ENCODE measurements at regions of chr6 and their contacts with region 1.

Region 1: DNA sequence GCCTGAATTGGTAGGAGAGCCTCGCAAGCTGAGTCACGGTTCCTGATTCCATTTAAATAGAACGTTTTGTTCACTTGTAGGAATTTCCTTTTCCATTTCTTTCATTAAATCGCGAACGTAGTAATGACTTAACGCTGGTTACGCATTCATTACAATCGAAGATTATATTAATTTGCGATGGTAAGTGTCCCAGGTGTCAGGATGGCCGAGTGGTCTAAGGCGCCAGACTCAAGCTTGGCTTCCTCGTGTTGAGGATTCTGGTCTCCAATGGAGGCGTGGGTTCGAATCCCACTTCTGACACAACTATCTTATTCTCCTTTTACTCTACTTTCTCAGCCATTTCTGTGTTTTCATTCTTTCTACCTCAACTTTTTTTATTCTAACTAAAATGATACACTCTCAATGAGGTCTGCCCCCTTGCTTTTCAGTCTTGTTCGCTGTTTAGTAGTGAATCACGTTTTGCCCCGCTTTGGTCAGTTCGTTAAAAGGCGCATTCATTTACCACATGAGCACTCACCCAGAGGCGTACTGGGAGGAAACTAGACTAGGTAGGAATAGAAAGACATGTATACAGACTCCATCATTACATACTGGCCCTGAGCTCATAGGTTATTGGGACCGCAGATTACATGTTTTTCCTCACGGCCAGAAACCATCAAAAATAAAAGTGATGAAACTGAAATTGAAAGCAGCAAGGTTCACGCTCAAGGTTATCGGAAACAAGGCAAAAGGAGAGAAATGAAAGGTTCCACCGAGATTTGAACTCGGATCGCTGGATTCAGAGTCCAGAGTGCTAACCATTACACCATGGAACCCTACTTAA is 17.3 kb upstream of the TRIM27 start:
- DNase-seq: peak; percentile 86
- H3K4me3 ChIP-seq: peak overlapping the region; percentile 67 to 84 (median 73)
- H3K27ac ChIP-seq: peak overlapping the region; percentile 62
- H3K4me1 ChIP-seq: peaks cover 7% of the 10 kb centered on the region
- H3K27me3 ChIP-seq: no peaks in the 10 kb centered on the region
- CTCF ChIP-seq: no peak

Region 2: GRCh38 chr6:28542440-28543296 is 398.4 kb before region 1 on chr6:
- CTCF ChIA-PET with region 1: no interaction called
- dilution Hi-C with region 1: no loop called
- in situ Hi-C with region 1: no loop called
- intact Hi-C with region 1: loop called (anchors 5 kb)
- DNase-seq: peak; percentile 95
- H3K4me3 ChIP-seq: peak overlapping the region; percentile 36 to 67 (median 42)
- H3K27ac ChIP-seq: no peak overlapping the region
- H3K4me1 ChIP-seq: peaks cover 12% of the 10 kb centered on the region
- H3K27me3 ChIP-seq: no peaks in the 10 kb centered on the region
- CTCF ChIP-seq: peak; percentile 59 to 63

Region 3: DNA sequence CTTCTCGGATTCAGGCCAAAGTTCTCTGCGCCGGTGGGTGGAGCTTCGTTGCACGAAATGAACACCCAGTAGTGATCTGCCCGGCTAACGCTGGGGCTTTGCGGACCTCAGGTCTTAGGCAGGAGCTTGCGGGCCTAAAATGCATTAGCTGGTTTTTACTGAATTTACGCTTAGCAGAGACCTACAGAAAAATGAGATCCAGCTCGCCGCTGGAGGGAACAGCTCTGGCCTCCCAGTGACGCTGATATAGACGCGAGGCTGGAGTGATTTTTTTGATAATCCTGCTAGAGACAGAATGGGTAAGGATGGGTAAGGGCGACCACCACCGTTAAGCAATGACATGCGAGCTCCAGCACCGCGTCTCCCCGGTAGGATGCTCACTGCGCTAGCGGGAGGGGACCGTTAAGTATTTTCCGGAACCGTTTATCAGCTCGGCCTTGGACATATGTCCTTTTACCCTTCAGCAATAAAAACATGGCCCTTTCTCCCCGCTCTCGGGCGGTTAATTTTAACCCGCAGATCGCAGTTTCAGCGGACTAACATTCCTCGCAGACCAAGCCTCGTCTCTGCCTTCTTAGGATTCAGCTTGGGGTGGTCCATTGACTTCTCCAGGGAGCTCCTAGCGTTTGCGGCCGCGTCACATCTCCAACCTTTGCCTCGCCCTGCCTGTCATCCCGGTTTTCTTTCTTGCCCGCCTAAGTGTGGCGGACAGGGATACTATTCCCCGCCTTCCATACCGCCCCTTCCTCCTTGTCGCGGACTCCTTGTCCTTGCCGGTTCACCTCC is 306.1 kb before region 1 on chr6:
- CTCF ChIA-PET with region 1: no interaction called
- dilution Hi-C with region 1: no loop called
- in situ Hi-C with region 1: no loop called
- intact Hi-C with region 1: no loop called
- DNase-seq: peak; percentile 9
- H3K4me3 ChIP-seq: peak overlapping the region; percentile 10 to 40 (median 36)
- H3K27ac ChIP-seq: no peak overlapping the region
- H3K4me1 ChIP-seq: no peaks in the 10 kb centered on the region
- H3K27me3 ChIP-seq: peaks cover 9% of the 10 kb centered on the region
- CTCF ChIP-seq: no peak

Region 4: GRCh38 chr6:28725890-28726348 is 215.2 kb before region 1 on chr6:
- CTCF ChIA-PET with region 1: no interaction called
- dilution Hi-C with region 1: no loop called
- in situ Hi-C with region 1: no loop called
- intact Hi-C with region 1: no loop called
- DNase-seq: peak; percentile 71
- H3K4me3 ChIP-seq: no peak overlapping the region
- H3K27ac ChIP-seq: no peak overlapping the region
- H3K4me1 ChIP-seq: no peaks in the 10 kb centered on the region
- H3K27me3 ChIP-seq: no peaks in the 10 kb centered on the region
- CTCF ChIP-seq: no peak

Region 5: DNA sequence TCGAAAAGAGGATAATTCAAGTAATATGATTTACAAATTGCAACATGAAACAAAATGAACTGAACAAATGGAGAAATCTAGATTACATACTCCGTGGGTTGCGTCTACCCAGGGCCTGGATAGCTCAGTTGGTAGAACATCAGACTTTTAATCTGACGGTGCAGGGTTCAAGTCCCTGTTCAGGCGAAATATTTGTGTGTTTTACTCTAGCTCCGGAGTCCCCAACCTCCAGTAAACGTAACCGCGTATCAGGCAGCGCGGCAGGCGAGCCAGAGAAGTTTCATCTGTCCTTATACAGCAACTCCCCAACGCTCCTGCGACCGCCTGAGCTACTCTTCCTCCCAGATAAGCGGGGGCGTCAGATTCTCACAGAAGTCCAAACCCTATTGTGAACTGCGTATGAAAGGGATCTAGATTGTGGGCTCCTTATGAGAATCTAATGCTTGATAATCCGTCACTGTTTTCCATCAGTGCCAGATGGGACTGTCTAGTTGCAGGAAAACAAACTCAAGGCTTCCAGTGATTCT is 193.4 kb before region 1 on chr6:
- CTCF ChIA-PET with region 1: no interaction called
- dilution Hi-C with region 1: no loop called
- in situ Hi-C with region 1: no loop called
- intact Hi-C with region 1: loop called (anchors 10 kb)
- DNase-seq: peak; percentile 92
- H3K4me3 ChIP-seq: peak overlapping the region; percentile 46 to 62 (median 56)
- H3K27ac ChIP-seq: no peak overlapping the region
- H3K4me1 ChIP-seq: peaks cover 12% of the 10 kb centered on the region
- H3K27me3 ChIP-seq: no peaks in the 10 kb centered on the region
- CTCF ChIP-seq: no peak

Region 6: GRCh38 chr6:28807682-28808280 is 133.3 kb before region 1 on chr6:
- CTCF ChIA-PET with region 1: interaction called, 5 read pairs
- dilution Hi-C with region 1: no loop called
- in situ Hi-C with region 1: no loop called
- intact Hi-C with region 1: loop called (anchors 1 kb)
- DNase-seq: peak; percentile 70
- H3K4me3 ChIP-seq: peak overlapping the region; percentile 16 to 33 (median 32)
- H3K27ac ChIP-seq: no peak overlapping the region
- H3K4me1 ChIP-seq: peaks cover 8% of the 10 kb centered on the region
- H3K27me3 ChIP-seq: no peaks in the 10 kb centered on the region
- CTCF ChIP-seq: no peak

Region 7: GRCh38 chr6:28868873-28869272 is 72.2 kb before region 1 on chr6:
- CTCF ChIA-PET with region 1: no interaction called
- dilution Hi-C with region 1: no loop called
- in situ Hi-C with region 1: no loop called
- intact Hi-C with region 1: no loop called
- DNase-seq: no peak
- H3K4me3 ChIP-seq: no peak overlapping the region
- H3K27ac ChIP-seq: no peak overlapping the region
- H3K4me1 ChIP-seq: peaks cover 9% of the 10 kb centered on the region
- H3K27me3 ChIP-seq: no peaks in the 10 kb centered on the region
- CTCF ChIP-seq: no peak

Region 8: DNA sequence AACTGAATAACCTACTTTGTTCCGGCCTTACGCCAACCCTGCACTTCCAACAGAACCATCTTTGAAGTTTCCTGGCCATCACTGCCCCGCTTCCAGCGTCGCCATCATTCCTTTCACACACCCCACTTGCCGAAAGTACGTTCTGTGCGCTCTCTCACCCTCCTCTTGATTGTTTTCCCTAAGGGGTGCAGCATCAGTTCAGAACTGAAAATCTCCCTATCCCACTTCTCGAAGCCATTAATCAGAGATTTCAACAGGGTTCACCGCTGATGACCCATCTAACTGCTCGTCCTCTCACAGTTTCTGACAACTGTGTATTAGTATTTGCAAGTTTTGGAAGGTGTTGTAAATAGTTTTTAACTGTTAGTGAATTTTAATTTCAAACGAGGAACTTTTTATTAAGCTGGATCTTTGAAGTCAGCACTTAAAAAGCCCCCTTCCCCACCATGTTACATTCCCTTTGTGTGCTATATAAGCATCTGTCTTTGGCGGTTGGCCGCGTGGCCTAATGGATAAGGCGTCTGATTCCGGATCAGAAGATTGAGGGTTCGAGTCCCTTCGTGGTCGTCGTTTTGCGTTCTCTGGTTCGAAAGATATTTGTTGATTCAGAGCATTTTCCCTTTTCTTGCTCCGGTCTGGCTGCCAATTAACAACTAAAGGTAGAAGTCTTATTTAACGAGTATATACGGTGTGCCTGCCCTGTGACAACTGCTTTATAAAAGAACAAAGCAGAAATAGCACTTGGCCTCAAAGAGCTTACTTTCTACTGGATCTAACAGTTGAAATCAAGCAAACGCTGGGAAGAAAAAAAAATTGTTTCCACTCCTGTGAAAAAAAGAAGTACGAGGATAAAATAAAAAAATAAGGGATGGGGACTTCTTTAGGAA is 59.9 kb before region 1 on chr6:
- CTCF ChIA-PET with region 1: no interaction called
- dilution Hi-C with region 1: no loop called
- in situ Hi-C with region 1: no loop called
- intact Hi-C with region 1: loop called (anchors 1 kb)
- DNase-seq: peak; percentile 58
- H3K4me3 ChIP-seq: peak overlapping the region; percentile 62 to 65 (median 65)
- H3K27ac ChIP-seq: no peak overlapping the region
- H3K4me1 ChIP-seq: no peaks in the 10 kb centered on the region
- H3K27me3 ChIP-seq: no peaks in the 10 kb centered on the region
- CTCF ChIP-seq: no peak

Region 9: DNA sequence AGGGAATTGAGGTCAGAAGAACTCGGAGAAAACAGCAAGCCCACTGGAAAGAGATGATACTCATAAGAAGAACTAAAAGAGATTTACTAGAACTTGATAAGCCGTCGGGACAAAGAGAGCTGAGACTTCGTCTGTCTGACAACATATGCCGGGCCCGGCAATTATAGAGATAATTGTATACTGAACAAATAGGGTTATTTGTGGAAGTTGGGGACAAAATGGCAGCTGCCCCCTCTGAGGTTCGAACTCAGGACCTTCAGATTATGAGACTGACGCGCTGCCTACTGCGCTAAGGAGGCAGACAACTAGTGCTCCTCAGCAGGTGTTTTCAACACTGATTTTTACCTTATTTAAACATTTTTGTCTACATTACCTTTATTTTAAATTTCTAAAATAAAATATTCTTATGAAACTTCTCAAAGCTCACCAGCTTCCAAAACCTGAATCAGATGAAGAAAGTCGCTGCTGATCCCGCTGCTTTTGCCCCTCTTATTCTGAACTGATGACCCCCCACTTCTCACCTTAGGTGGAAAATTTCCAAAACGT is 12.0 kb after region 1 on chr6:
- CTCF ChIA-PET with region 1: no interaction called
- dilution Hi-C with region 1: no loop called
- in situ Hi-C with region 1: no loop called
- intact Hi-C with region 1: loop called (anchors 1 kb)
- DNase-seq: peak; percentile 59
- H3K4me3 ChIP-seq: peak overlapping the region; percentile 51 to 68 (median 63)
- H3K27ac ChIP-seq: peak overlapping the region; percentile 2
- H3K4me1 ChIP-seq: peaks cover 3% of the 10 kb centered on the region
- H3K27me3 ChIP-seq: no peaks in the 10 kb centered on the region
- CTCF ChIP-seq: no peak

Measured in mammary epithelial cell (primary cell).